MCF 10A (cell line): ENCODE measurements at regions of chr4 and their contacts with region 1.

Region 1: GRCh38 chr4:94507708-94508107 is 56.0 kb downstream of the PDLIM5 start:
- DNase-seq: peak; percentile 95
- H3K4me3 Mint-ChIP-seq: no peak overlapping the region
- H3K27ac Mint-ChIP-seq: peak overlapping the region; percentile 74
- H3K4me1 Mint-ChIP-seq: peaks cover 34% of the 10 kb centered on the region
- H3K27me3 Mint-ChIP-seq: no peaks in the 10 kb centered on the region
- CTCF ChIP-seq: no peak

Region 2: GRCh38 chr4:94271248-94271647 is 236.5 kb before region 1 on chr4:
- CTCF ChIA-PET with region 1: no interaction called
- POLR2A ChIA-PET with region 1: no interaction called
- intact Hi-C with region 1: no loop called
- DNase-seq: no peak
- H3K4me3 Mint-ChIP-seq: no peak overlapping the region
- H3K27ac Mint-ChIP-seq: no peak overlapping the region
- H3K4me1 Mint-ChIP-seq: no peaks in the 10 kb centered on the region
- H3K27me3 Mint-ChIP-seq: no peaks in the 10 kb centered on the region
- CTCF ChIP-seq: no peak

Region 3: DNA sequence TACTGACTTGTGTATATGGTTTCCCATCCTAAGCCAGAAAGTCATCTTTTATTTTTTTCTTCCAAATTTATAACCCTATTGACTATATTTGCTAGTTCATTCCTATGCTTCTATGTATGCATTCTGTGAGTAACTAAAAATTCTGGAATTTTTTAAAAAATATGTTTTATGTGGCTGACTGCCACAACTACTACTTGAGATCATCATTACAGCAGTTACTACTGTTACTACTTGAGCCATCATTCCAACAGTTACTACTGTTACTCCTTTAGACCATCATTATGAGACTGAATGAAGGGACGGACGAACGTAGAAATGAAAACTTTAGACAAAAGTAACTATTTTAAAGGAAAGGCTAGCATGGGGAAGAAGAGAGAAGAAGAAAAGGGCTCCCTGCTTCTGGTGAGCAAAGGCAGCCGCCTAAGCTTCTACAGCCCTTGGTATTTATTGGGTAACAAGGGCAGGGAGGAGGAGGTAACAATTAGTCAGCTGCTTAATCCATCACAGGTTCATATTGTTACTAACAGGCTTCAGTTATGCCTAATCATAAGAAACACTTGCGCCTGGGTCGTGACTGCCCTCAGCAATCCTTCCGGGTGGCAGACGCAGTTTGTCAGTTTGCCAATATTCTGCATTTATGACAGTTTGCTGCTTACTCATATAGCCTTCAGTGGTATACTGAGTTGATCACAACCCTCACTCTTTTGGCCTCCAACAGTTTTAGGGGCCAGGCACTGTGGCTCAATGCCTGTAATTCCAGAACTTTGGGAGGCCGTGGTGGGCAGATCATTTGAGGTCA is 24.5 kb after region 1 on chr4:
- CTCF ChIA-PET with region 1: no interaction called
- POLR2A ChIA-PET with region 1: interaction called, 13 read pairs
- intact Hi-C with region 1: no loop called
- DNase-seq: peak; percentile 89
- H3K4me3 Mint-ChIP-seq: peak overlapping the region; percentile 32
- H3K27ac Mint-ChIP-seq: peak overlapping the region; percentile 2
- H3K4me1 Mint-ChIP-seq: peaks cover 33% of the 10 kb centered on the region
- H3K27me3 Mint-ChIP-seq: no peaks in the 10 kb centered on the region
- CTCF ChIP-seq: no peak

Region 4: GRCh38 chr4:94595879-94596483 is 88.3 kb after region 1 on chr4:
- CTCF ChIA-PET with region 1: no interaction called
- POLR2A ChIA-PET with region 1: interaction called, 3 read pairs
- intact Hi-C with region 1: loop called (anchors 10 kb)
- DNase-seq: peak; percentile 63
- H3K4me3 Mint-ChIP-seq: no peak overlapping the region
- H3K27ac Mint-ChIP-seq: no peak overlapping the region
- H3K4me1 Mint-ChIP-seq: peaks cover 5% of the 10 kb centered on the region
- H3K27me3 Mint-ChIP-seq: no peaks in the 10 kb centered on the region
- CTCF ChIP-seq: peak; percentile 66